ENCODE measurements at regions of chr2 and their contacts with region 1.

Region 1: DNA sequence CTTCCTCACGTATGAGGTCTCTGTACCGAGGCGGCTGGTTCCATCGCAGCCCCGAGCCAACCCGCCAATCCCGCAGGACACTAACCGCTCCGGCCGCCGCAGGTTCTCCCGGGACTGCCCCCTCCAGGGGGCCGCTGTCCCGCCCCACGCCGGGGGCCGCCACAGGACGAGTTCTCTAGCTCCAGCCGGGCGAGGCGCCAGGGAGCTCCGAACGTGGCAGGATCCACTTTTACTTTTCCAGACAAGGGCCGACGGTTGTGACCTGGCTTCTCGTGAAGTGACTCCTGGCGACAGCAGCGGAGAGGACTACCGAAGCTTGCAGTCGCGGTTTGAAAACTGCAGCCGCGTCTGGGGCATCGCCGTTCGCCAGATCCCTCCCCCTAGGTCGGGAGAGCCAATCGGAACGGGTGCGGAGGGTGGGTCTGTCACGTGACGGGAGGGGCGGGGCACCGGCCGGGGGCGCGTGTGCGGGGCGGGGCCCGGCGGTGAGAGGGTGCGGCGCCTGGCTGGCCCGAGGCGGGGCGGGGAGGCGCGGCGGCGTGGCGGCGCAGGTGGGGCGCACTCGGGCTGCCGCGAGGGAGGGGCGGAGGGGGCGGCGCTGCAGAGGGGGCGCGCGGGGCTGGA is at the start of gene STK17B:
- DNase-seq: peak; percentile 97
- ATAC-seq: peak; percentile 70
- H3K4me3 Mint-ChIP-seq: peak within 1 kb of the TSS; percentile 99
- H3K27ac Mint-ChIP-seq: peak within 1 kb of the TSS; percentile 91
- H3K4me1 Mint-ChIP-seq: peaks cover 34% of the 10 kb centered on the region
- H3K27me3 Mint-ChIP-seq: no peaks in the 10 kb centered on the region
- CTCF ChIP-seq: no peak
- total RNA-seq, gene STK17B: 237 to 250 TPM

Region 2: DNA sequence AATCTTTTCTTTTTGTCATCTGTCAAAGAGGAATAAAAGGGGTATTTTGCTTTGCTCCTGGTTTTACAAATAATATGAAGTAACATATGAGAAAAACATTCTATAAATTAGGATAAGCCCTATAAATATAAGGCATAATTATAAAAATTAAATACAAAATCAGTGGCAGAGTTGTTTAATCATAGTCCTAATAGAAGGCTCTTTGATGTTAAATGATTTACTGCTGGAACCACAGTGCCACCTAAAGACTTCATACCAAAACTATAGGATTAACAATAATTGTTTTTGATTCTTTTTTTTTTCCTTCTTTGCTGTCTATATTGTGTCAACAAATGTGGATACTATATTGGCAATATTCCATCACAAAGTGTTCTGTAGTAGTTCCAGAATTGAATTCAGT is 1352.0 kb before region 1 on chr2:
- CTCF ChIA-PET with region 1: no interaction called
- POLR2A ChIA-PET with region 1: no interaction called
- intact Hi-C with region 1: no loop called
- DNase-seq: no peak
- ATAC-seq: no peak
- H3K4me3 Mint-ChIP-seq: no peak overlapping the region
- H3K27ac Mint-ChIP-seq: no peak overlapping the region
- H3K4me1 Mint-ChIP-seq: no peaks in the 10 kb centered on the region
- H3K27me3 Mint-ChIP-seq: no peaks in the 10 kb centered on the region
- CTCF ChIP-seq: no peak

Region 3: DNA sequence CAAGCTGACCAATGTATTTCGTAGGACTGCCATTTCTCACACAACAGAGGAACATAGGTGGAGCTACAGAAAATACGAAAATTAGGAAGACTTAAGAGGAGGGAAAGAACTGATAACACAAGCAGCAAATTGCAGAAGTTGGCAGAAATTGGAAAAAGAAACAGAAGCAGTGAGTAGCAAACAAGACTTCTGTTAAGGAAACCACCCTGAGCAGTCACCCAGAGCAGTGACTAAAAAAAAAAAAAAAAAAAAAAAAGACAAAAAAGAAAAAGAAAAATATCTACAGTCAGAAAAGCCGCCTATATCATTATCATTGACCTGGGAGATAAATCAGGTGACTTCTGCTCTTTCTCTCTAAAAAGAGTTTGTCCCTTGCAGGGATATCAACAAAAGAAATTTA is 21.4 kb before region 1 on chr2:
- CTCF ChIA-PET with region 1: interaction called, 3 read pairs
- POLR2A ChIA-PET with region 1: interaction called, 97 read pairs
- intact Hi-C with region 1: no loop called
- DNase-seq: no peak
- ATAC-seq: peak; percentile 14
- H3K4me3 Mint-ChIP-seq: peak overlapping the region; percentile 57
- H3K27ac Mint-ChIP-seq: peak overlapping the region; percentile 91
- H3K4me1 Mint-ChIP-seq: peaks cover 83% of the 10 kb centered on the region
- H3K27me3 Mint-ChIP-seq: no peaks in the 10 kb centered on the region
- CTCF ChIP-seq: no peak

Region 4: DNA sequence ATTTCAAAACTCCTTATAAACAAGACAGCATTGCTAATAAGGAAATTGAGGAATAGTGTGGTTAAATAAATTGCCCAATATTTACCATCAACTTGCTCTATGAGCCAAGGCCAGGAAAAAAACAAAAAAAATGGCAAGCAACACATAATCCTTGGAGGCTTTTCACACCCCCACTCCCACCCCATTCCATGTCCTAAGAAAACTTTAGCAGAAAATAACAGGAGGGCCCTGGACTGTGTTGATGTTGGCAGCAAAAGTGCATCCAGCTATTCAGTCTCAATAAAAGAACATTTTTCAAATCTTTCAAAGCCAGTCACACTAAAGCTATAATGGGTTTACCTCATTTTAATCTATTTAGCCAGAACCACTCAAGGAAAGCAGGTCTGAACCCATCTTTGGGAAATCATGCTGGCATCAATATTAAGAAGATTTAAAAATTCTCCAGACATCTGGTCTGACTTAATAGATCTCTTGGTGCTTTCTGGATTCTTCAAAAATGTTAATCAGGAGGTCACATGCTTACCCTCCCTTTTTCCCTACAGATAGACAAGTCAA is 34.6 kb after region 1 on chr2:
- CTCF ChIA-PET with region 1: interaction called, 3 read pairs
- POLR2A ChIA-PET with region 1: interaction called, 10 read pairs
- intact Hi-C with region 1: loop called (anchors 2 kb)
- DNase-seq: no peak
- ATAC-seq: no peak
- H3K4me3 Mint-ChIP-seq: no peak overlapping the region
- H3K27ac Mint-ChIP-seq: no peak overlapping the region
- H3K4me1 Mint-ChIP-seq: peaks cover 39% of the 10 kb centered on the region
- H3K27me3 Mint-ChIP-seq: no peaks in the 10 kb centered on the region
- CTCF ChIP-seq: no peak

Region 5: GRCh38 chr2:196233021-196233804 is 61.9 kb after region 1 on chr2:
- CTCF ChIA-PET with region 1: interaction called, 27 read pairs
- POLR2A ChIA-PET with region 1: interaction called, 56 read pairs
- intact Hi-C with region 1: loop called (anchors 2 kb)
- DNase-seq: no peak
- ATAC-seq: peak; percentile 39
- H3K4me3 Mint-ChIP-seq: no peak overlapping the region
- H3K27ac Mint-ChIP-seq: peak overlapping the region; percentile 96
- H3K4me1 Mint-ChIP-seq: peaks cover 86% of the 10 kb centered on the region
- H3K27me3 Mint-ChIP-seq: no peaks in the 10 kb centered on the region
- CTCF ChIP-seq: no peak

Region 6: DNA sequence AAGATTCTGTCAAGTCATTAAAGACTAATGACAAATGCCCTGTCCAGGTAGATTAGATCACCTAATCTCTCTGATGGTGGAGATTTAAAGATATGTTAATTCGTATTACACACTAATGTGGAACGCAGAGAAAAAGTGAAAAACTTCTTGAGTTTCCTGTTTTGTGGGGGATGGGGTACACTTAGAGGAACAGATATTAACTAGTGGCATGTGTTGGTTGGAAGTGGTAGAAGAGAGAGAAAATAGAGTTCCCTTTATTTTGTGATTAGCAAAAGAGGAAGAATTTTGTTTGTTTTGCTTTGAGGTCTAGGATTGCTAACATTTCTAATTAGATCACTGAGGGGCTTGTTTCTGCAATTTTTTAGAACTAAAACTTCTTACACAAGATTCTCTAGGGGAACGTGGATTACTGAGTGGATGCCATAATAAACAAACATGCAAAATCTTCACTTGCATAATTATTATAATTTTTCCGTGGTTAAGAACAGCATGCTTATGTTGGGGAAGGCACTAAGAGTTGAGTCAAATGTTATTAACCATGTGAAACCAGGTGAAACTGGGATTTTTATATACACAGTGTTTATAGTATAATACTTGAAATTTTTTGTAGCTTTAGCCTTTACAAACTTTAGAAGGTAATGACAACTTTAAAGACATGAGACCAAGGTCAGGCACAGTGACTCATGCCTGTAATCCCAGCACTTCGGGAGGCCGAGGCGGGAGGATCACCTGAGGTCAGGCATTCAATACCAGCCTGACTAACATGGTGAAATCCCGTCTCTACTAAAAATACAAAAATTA is 97.4 kb after region 1 on chr2:
- CTCF ChIA-PET with region 1: interaction called, 3 read pairs
- POLR2A ChIA-PET with region 1: interaction called, 52 read pairs
- intact Hi-C with region 1: loop called (anchors 5 kb)
- DNase-seq: peak; percentile 53
- ATAC-seq: peak; percentile 43
- H3K4me3 Mint-ChIP-seq: peak overlapping the region; percentile 50
- H3K27ac Mint-ChIP-seq: peak overlapping the region; percentile 86
- H3K4me1 Mint-ChIP-seq: peaks cover 57% of the 10 kb centered on the region
- H3K27me3 Mint-ChIP-seq: no peaks in the 10 kb centered on the region
- CTCF ChIP-seq: no peak

Measured in activated CD8-positive, alpha-beta T cell treated with anti-CD3 and anti-CD28 coated beads for 36 hours (primary cell).